ENCODE measurements at regions of chr1 and their contacts with region 1.

Region 1: DNA sequence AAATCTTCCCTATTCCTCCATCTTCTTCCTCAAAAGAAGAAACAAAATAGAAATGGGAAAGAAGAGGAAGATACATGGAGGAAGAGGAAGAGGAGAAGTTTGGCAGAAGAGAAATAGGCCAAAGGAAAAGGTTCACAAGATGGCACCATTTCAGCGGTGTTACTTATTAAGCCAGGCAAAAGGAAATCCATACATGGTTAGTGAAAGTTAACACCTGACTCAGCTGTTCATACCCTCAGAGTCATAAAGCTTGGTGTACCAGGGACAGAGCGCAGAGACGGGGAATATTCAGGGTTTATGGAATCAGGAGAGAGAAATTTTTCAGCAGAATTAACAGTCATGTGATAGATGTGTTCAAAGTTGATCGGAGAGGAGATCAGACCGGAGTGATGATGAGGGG is 70.6 kb downstream of the COQ8A start:
- DNase-seq: no peak
- H3K4me3 ChIP-seq: no peak overlapping the region
- H3K27ac ChIP-seq: no peak overlapping the region
- H3K4me1 ChIP-seq: no peaks in the 10 kb centered on the region
- H3K27me3 ChIP-seq: no peaks in the 10 kb centered on the region
- CTCF ChIP-seq: no peak

Region 2: DNA sequence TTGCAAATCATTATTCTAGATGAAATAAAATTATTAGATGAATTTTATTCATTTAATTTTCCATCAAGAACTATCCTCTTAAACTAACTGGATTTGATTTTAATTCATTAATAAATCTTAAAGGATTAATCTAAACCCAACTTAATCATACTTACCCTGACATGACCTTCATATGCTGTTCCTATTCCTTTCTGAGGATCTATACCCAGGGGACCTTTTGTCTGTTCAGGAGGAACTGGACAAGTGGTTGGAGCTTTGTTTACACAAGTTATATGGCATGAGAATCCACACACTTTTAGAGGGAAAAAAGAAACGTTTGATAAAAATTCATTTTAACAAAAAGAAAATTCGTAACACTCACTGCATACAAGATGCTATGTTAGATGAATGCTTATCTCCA is 24.7 kb after region 1 on chr1:
- CTCF ChIA-PET with region 1: interaction called, 3 read pairs
- POLR2A ChIA-PET with region 1: no interaction called
- intact Hi-C with region 1: loop called (anchors 2 kb)
- DNase-seq: no peak
- H3K4me3 ChIP-seq: no peak overlapping the region
- H3K27ac ChIP-seq: no peak overlapping the region
- H3K4me1 ChIP-seq: no peaks in the 10 kb centered on the region
- H3K27me3 ChIP-seq: no peaks in the 10 kb centered on the region
- CTCF ChIP-seq: no peak